Activated T-helper 2 cell treated with anti-CD3 and anti-CD28 coated beads, Interferon-gamma antibody, Interleukin-2, Interleukin-4, amounts not matched to agents 10 μg/mL and 5 μg/mL and 100 μg/mL, durations not matched to agents 14 hours and 24 hours and 36 hours (primary cell): ENCODE measurements at regions of chr20 and their contacts with region 1.

Region 1: DNA sequence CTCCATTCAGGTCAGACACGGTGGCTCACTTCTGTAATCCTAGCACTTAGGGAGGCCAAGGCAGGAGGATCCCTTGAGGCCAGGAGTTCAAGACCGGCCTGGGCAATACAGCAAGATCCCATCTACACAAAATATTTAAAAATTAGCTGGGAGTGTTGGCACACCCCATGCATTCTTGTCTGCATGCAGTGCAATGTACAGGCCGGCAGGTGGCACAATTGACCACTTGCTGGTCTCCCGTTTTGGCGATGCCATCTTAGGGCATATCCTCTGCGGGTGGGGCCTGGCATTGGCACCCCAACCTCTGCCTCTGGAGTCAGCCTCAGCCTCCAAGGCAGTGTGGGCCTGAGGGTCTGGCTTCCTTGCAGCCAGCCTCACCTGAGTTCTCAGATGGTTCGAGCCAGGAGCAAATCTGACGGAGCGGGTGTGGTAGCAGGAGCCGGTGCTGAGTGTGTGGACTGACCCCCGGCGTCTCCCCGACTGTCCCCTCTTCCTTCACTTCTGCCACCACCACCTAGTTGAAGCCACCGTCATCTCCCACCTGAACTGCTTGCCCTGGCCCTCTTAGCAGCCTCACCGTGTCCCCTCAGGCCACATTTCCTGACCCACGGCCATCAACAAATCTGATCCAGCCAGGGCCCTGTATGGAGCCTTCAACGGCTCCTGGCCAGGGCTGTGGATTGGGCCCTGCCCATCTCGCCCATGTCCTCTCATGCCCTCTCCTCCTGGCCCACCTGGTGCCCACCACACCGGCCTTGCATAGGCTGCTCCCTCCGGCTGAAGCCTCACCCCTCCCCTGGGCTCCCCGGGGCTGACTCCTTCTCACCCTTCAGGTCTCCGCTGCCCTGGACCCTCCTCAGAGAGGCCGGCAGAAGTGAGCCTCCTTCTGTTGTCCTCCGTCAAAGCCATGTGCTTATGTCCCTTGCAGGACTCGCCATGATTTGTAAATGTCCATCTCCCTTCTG is 44.0 kb downstream of the EFCAB8 start:
- DNase-seq: peak; percentile 49
- H3K4me3 Mint-ChIP-seq: no peak overlapping the region
- H3K27ac Mint-ChIP-seq: peak overlapping the region; percentile 18
- H3K4me1 Mint-ChIP-seq: peaks cover 10% of the 10 kb centered on the region
- H3K27me3 Mint-ChIP-seq: no peaks in the 10 kb centered on the region

Region 2: GRCh38 chr20:32920066-32920465 is 17.3 kb after region 1 on chr20:
- intact Hi-C with region 1: no loop called
- DNase-seq: no peak
- H3K4me3 Mint-ChIP-seq: no peak overlapping the region
- H3K27ac Mint-ChIP-seq: no peak overlapping the region
- H3K4me1 Mint-ChIP-seq: no peaks in the 10 kb centered on the region
- H3K27me3 Mint-ChIP-seq: no peaks in the 10 kb centered on the region

Region 3: GRCh38 chr20:32945710-32946221 is 43.0 kb after region 1 on chr20:
- intact Hi-C with region 1: loop called (anchors 1 kb)
- DNase-seq: no peak
- H3K4me3 Mint-ChIP-seq: no peak overlapping the region
- H3K27ac Mint-ChIP-seq: peak overlapping the region; percentile 51
- H3K4me1 Mint-ChIP-seq: peaks cover 34% of the 10 kb centered on the region
- H3K27me3 Mint-ChIP-seq: no peaks in the 10 kb centered on the region

Region 4: GRCh38 chr20:33097001-33097400 is 194.3 kb after region 1 on chr20:
- intact Hi-C with region 1: loop called (anchors 1 kb)
- DNase-seq: no peak
- H3K4me3 Mint-ChIP-seq: no peak overlapping the region
- H3K27ac Mint-ChIP-seq: no peak overlapping the region
- H3K4me1 Mint-ChIP-seq: peaks cover 2% of the 10 kb centered on the region
- H3K27me3 Mint-ChIP-seq: peaks cover 4% of the 10 kb centered on the region

Region 5: DNA sequence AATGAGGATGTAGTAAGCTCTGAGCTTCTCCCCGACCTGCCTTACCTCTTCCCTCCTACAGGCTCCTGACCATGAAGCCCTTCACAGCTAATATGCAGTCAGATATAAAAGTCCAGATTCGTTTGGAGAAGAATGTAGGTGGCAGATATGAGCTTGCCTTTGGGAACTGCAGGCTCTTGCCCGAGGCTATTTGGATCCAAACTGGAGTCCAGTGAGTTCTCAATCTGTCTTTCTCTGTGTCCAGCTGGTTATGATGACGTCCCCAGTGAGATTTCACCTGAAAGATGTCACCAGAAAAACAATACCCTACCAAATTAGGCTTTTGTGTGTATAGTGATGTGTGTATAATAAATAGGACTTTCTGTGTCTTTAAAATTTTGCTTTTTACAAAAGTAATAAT is 299.7 kb after region 1 on chr20:
- intact Hi-C with region 1: no loop called
- DNase-seq: no peak
- H3K4me3 Mint-ChIP-seq: no peak overlapping the region
- H3K27ac Mint-ChIP-seq: no peak overlapping the region
- H3K4me1 Mint-ChIP-seq: no peaks in the 10 kb centered on the region
- H3K27me3 Mint-ChIP-seq: peaks cover 6% of the 10 kb centered on the region

Region 6: GRCh38 chr20:33299111-33299603 is 396.4 kb after region 1 on chr20:
- intact Hi-C with region 1: loop called (anchors 5 kb)
- DNase-seq: peak; percentile 58
- H3K4me3 Mint-ChIP-seq: no peak overlapping the region
- H3K27ac Mint-ChIP-seq: no peak overlapping the region
- H3K4me1 Mint-ChIP-seq: no peaks in the 10 kb centered on the region
- H3K27me3 Mint-ChIP-seq: peaks cover 10% of the 10 kb centered on the region